Activated CD4-positive, alpha-beta T cell treated with anti-CD3 and anti-CD28 coated beads, Interleukin-2, amount 10 ng/mL, durations not matched to agents 7 days and 5 days (primary cell): ENCODE measurements at regions of chr2 and their contacts with region 1.

Region 1: DNA sequence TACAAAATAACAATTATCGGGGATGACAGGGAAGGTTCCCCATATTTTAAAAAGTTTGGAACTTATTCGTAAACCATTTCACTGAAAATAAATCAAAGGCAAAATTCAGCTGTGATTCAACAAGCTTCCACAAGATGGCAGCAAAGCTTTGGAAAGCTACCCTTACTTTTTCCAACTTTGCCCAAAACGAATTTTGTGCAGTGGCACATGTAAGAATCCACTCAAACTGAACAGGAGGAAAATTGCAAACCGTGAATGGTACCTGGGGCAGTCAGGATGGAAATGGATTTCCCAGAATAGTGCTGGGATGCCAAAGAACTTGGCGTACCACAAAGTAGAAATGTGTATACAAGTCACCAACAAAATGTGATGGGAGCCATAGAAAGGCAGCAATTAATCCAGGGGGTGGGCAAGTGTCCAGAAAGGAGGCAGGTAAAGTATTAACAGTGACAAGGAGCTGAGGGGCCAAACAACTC is 10.7 kb downstream of the RPL31 start:
- DNase-seq: peak; percentile 47
- H3K4me3 Mint-ChIP-seq: no peak overlapping the region
- H3K27ac Mint-ChIP-seq: no peak overlapping the region
- H3K4me1 Mint-ChIP-seq: peaks cover 19% of the 10 kb centered on the region
- H3K27me3 Mint-ChIP-seq: no peaks in the 10 kb centered on the region

Region 2: GRCh38 chr2:101036562-101037457 is 24.1 kb after region 1 on chr2:
- CTCF ChIA-PET with region 1: no interaction called
- POLR2A ChIA-PET with region 1: no interaction called
- DNase-seq: no peak
- H3K4me3 Mint-ChIP-seq: no peak overlapping the region
- H3K27ac Mint-ChIP-seq: no peak overlapping the region
- H3K4me1 Mint-ChIP-seq: no peaks in the 10 kb centered on the region
- H3K27me3 Mint-ChIP-seq: no peaks in the 10 kb centered on the region

Region 3: GRCh38 chr2:101205521-101205998 is 192.8 kb after region 1 on chr2:
- CTCF ChIA-PET with region 1: interaction called, 11 read pairs
- POLR2A ChIA-PET with region 1: no interaction called
- DNase-seq: peak; percentile 67
- H3K4me3 Mint-ChIP-seq: peak overlapping the region; percentile 55
- H3K27ac Mint-ChIP-seq: peak overlapping the region; percentile 87
- H3K4me1 Mint-ChIP-seq: peaks cover 14% of the 10 kb centered on the region
- H3K27me3 Mint-ChIP-seq: no peaks in the 10 kb centered on the region